ENCODE measurements at regions of chr15 and their contacts with region 1.

Region 1: DNA sequence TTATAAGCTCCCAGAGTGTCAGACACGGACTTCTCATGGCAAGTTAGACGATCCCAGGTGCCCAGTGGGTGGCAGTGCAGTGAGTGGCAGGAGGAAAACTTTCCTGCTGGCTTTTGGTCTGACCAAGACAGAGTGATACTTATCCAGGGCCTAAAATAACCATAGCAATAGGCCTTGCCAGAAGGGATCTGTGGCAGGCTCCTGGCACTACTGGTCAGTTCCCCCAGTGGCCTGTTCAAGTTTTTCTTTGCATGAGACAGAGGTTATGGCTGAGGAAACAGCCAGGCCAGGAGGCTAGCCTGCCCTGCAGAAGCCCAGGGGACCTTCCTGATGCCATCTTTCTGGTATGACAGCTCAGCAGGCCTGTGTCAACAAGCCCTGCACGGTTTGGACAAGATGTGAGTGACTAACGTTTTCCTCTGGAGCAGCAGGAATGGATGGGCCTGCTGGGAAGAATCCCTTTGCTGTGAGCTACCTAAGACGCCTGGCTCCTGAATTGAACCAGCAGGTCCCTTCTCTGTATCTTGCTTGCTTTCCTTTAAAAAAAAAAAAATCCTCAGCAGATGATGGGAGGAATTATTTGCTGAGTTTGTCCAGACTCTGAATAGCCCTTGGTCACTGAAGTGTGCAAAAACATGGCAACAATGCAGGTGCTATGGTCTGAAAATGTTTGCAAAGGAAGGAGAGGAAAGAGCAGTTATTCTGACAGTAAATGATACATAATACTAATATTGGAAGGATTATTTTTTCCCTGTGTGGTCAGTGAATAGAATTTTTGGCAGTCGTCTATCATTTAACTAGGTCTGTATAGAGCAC is 18.0 kb downstream of the SCG5 start:
- DNase-seq: peak; percentile 3 to 56
- ATAC-seq: peak; percentile 85 to 97
- H3K4me3 ChIP-seq: no peak overlapping the region
- H3K27ac ChIP-seq: peak overlapping the region in 1 of 4 donors; percentile 38
- H3K4me1 ChIP-seq: peaks cover 13 to 17% of the 10 kb centered on the region in 2 donors
- H3K27me3 ChIP-seq: no peaks in the 10 kb centered on the region
- CTCF ChIP-seq: peak in 1 of 5 experiments; percentile 19
- POLR2A ChIP-seq: no peak

Region 2: GRCh38 chr15:32824777-32825176 is 165.2 kb after region 1 on chr15:
- in situ Hi-C with region 1: no loop called
- intact Hi-C with region 1: no loop called
- DNase-seq: no peak
- ATAC-seq: no peak
- H3K4me3 ChIP-seq: no peak overlapping the region
- H3K27ac ChIP-seq: no peak overlapping the region
- H3K4me1 ChIP-seq: no peaks in the 10 kb centered on the region
- H3K27me3 ChIP-seq: no peaks in the 10 kb centered on the region
- CTCF ChIP-seq: no peak
- POLR2A ChIP-seq: no peak

Region 3: GRCh38 chr15:32956006-32956405 is 296.5 kb after region 1 on chr15:
- in situ Hi-C with region 1: no loop called
- intact Hi-C with region 1: loop called (anchors 5 kb)
- DNase-seq: no peak
- ATAC-seq: no peak
- H3K4me3 ChIP-seq: no peak overlapping the region
- H3K27ac ChIP-seq: no peak overlapping the region
- H3K4me1 ChIP-seq: peaks cover 0 to 3% of the 10 kb centered on the region in 2 donors
- H3K27me3 ChIP-seq: no peaks in the 10 kb centered on the region
- CTCF ChIP-seq: peak in 2 of 5 experiments; percentile 4 to 32
- POLR2A ChIP-seq: no peak

Region 4: GRCh38 chr15:32994810-32995424 is 335.4 kb after region 1 on chr15:
- in situ Hi-C with region 1: loop called in 3 of 4 experiments (anchors 25 kb)
- intact Hi-C with region 1: loop called (anchors 2 kb)
- DNase-seq: no peak
- ATAC-seq: no peak
- H3K4me3 ChIP-seq: no peak overlapping the region
- H3K27ac ChIP-seq: no peak overlapping the region
- H3K4me1 ChIP-seq: no peaks in the 10 kb centered on the region
- H3K27me3 ChIP-seq: no peaks in the 10 kb centered on the region
- CTCF ChIP-seq: peak in 3 of 5 experiments; percentile 10 to 34 (median 30)
- POLR2A ChIP-seq: no peak

Region 5: GRCh38 chr15:33330931-33331330 is 671.4 kb after region 1 on chr15:
- in situ Hi-C with region 1: no loop called
- intact Hi-C with region 1: no loop called
- DNase-seq: no peak
- ATAC-seq: no peak
- H3K4me3 ChIP-seq: no peak overlapping the region
- H3K27ac ChIP-seq: no peak overlapping the region
- H3K4me1 ChIP-seq: no peaks in the 10 kb centered on the region
- H3K27me3 ChIP-seq: no peaks in the 10 kb centered on the region
- CTCF ChIP-seq: no peak
- POLR2A ChIP-seq: no peak

Measured in gastrocnemius medialis (tissue), 4 donors.